GM12878 (cell line): ENCODE measurements at regions of chr1 and their contacts with region 1.

Region 1: GRCh38 chr1:162633081-162633762 is 958 bp downstream of the DDR2 start:
- DNase-seq: peak; percentile 64
- ATAC-seq: peak; percentile 82
- H3K4me3 ChIP-seq: peak overlapping the region; percentile 23; the same call in 1 of the 2 replicates
- H3K27ac ChIP-seq: peak overlapping the region; percentile 82
- H3K4me1 ChIP-seq: peaks cover 32% of the 10 kb centered on the region
- H3K27me3 ChIP-seq: no peaks in the 10 kb centered on the region
- CTCF ChIP-seq: no peak
- EP300 ChIP-seq: peak in 1 of 2 experiments; percentile 54; a peak in 1 of 4 replicates
- POLR2A ChIP-seq: no peak
- RAD21 ChIP-seq: no peak

Region 2: GRCh38 chr1:162430583-162430982 is 202.6 kb before region 1 on chr1:
- CTCF ChIA-PET with region 1: no interaction called
- POLR2A ChIA-PET with region 1: no interaction called
- RAD21 ChIA-PET with region 1: no interaction called
- SMC1A ChIA-PET with region 1: no interaction called
- in situ Hi-C with region 1: no loop called
- intact Hi-C with region 1: no loop called
- DNase-seq: no peak
- ATAC-seq: no peak
- H3K4me3 ChIP-seq: no peak overlapping the region
- H3K27ac ChIP-seq: no peak overlapping the region
- H3K4me1 ChIP-seq: no peaks in the 10 kb centered on the region
- H3K27me3 ChIP-seq: no peaks in the 10 kb centered on the region
- CTCF ChIP-seq: no peak
- EP300 ChIP-seq: no peak
- POLR2A ChIP-seq: no peak
- RAD21 ChIP-seq: no peak

Region 3: DNA sequence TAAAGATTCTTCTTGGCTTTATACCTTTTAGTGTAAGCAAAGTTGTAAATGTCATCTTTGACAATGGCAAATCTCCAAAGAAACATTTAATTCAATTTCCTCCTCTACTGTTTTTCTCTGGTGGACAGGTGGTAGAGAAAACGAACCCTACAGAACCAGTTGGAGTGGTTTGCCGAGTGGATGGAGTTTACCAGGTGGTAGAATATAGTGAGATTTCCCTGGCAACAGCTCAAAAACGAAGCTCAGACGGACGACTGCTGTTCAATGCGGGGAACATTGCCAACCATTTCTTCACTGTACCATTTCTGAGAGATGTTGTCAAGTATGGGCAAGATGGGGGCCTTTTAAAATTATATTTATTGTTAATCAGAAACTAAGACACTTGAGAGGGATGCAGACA is 45.9 kb before region 1 on chr1:
- CTCF ChIA-PET with region 1: no interaction called
- POLR2A ChIA-PET with region 1: no interaction called
- RAD21 ChIA-PET with region 1: no interaction called
- SMC1A ChIA-PET with region 1: no interaction called
- in situ Hi-C with region 1: no loop called
- intact Hi-C with region 1: no loop called
- DNase-seq: no peak
- ATAC-seq: no peak
- H3K4me3 ChIP-seq: no peak overlapping the region
- H3K27ac ChIP-seq: no peak overlapping the region
- H3K4me1 ChIP-seq: no peaks in the 10 kb centered on the region
- H3K27me3 ChIP-seq: no peaks in the 10 kb centered on the region
- CTCF ChIP-seq: no peak
- EP300 ChIP-seq: no peak
- POLR2A ChIP-seq: no peak
- RAD21 ChIP-seq: no peak

Region 4: GRCh38 chr1:162612606-162613400 is 20.4 kb before region 1 on chr1:
- CTCF ChIA-PET with region 1: interaction called, 79 read pairs
- POLR2A ChIA-PET with region 1: interaction called, 4 read pairs
- RAD21 ChIA-PET with region 1: interaction called, 27 read pairs
- SMC1A ChIA-PET with region 1: interaction called, 48 read pairs
- in situ Hi-C with region 1: no loop called
- intact Hi-C with region 1: no loop called
- DNase-seq: no peak
- ATAC-seq: no peak; the same call in 2 of the 3 replicates
- H3K4me3 ChIP-seq: no peak overlapping the region
- H3K27ac ChIP-seq: no peak overlapping the region
- H3K4me1 ChIP-seq: no peaks in the 10 kb centered on the region
- H3K27me3 ChIP-seq: no peaks in the 10 kb centered on the region
- CTCF ChIP-seq: no peak
- EP300 ChIP-seq: no peak
- POLR2A ChIP-seq: no peak
- RAD21 ChIP-seq: no peak

Region 5: GRCh38 chr1:162678439-162678838 is 45.2 kb after region 1 on chr1:
- CTCF ChIA-PET with region 1: interaction called, 5 read pairs
- POLR2A ChIA-PET with region 1: interaction called, 8 read pairs
- RAD21 ChIA-PET with region 1: interaction called, 27 read pairs
- SMC1A ChIA-PET with region 1: interaction called, 80 read pairs
- in situ Hi-C with region 1: no loop called
- intact Hi-C with region 1: no loop called
- DNase-seq: no peak
- ATAC-seq: no peak
- H3K4me3 ChIP-seq: no peak overlapping the region
- H3K27ac ChIP-seq: no peak overlapping the region
- H3K4me1 ChIP-seq: peaks cover 8% of the 10 kb centered on the region
- H3K27me3 ChIP-seq: no peaks in the 10 kb centered on the region
- CTCF ChIP-seq: no peak
- EP300 ChIP-seq: no peak
- POLR2A ChIP-seq: no peak
- RAD21 ChIP-seq: no peak

Region 6: GRCh38 chr1:162703708-162704107 is 70.5 kb after region 1 on chr1:
- CTCF ChIA-PET with region 1: interaction called, 4 read pairs
- POLR2A ChIA-PET with region 1: interaction called, 5 read pairs
- RAD21 ChIA-PET with region 1: interaction called, 39 read pairs
- SMC1A ChIA-PET with region 1: interaction called, 39 read pairs
- in situ Hi-C with region 1: no loop called
- intact Hi-C with region 1: no loop called
- DNase-seq: no peak
- ATAC-seq: no peak
- H3K4me3 ChIP-seq: no peak overlapping the region
- H3K27ac ChIP-seq: no peak overlapping the region
- H3K4me1 ChIP-seq: 0 out of 2 replicates have a peak, but pooled peaks cover 5% of the 10 kb centered on the region
- H3K27me3 ChIP-seq: no peaks in the 10 kb centered on the region
- CTCF ChIP-seq: no peak
- EP300 ChIP-seq: no peak
- POLR2A ChIP-seq: no peak
- RAD21 ChIP-seq: no peak

Region 7: DNA sequence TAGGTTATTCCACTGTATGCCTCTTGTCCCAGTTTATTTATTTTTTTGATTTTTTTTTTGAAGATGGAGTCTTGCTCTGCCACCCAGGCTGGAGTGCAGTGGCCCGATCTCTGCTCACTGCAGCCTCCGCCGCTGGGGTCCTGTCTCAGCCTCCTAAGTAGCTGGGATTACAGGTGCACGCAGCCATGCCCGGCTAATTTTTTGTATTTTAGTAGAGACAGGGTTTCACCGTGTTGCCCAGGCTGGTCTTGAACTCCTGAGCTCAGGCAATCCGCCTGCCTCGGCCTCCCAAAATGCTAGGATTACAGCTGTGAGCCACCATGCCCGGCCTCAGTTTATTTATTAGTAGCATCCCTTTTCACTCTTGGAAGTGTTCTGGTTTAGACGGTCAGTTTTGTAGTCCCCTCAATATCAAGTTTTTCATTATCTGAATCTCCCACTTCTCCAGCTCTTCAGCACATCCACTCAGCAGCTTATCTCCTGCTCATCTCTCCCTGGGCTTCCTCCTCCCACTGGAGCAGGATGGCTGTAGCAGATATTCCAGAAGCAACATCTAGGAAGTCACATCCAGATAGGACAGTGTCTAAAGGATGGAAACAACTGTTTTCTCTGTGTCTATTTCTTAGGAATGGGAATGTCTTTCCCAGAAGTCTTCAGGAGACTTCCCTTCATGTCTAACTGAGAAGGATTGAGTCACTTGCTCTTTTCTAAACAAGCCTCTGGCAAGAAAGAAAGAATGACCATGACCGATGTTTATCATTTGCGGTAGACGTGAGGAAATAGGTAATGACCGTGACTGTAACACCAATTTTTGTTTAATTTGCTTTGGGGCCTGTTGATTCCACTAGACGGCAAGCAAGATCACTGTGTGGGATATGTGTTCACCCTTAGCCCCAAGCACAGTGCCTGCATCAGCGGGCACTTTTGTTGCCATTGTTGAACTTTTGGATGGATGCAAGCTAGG is 213.3 kb after region 1 on chr1:
- CTCF ChIA-PET with region 1: no interaction called
- POLR2A ChIA-PET with region 1: no interaction called
- RAD21 ChIA-PET with region 1: no interaction called
- SMC1A ChIA-PET with region 1: no interaction called
- in situ Hi-C with region 1: no loop called
- intact Hi-C with region 1: no loop called
- DNase-seq: no peak
- ATAC-seq: no peak
- H3K4me3 ChIP-seq: no peak overlapping the region
- H3K27ac ChIP-seq: no peak overlapping the region
- H3K4me1 ChIP-seq: no peaks in the 10 kb centered on the region
- H3K27me3 ChIP-seq: no peaks in the 10 kb centered on the region; a peak in 1 of 4 replicates
- CTCF ChIP-seq: no peak
- EP300 ChIP-seq: no peak
- POLR2A ChIP-seq: no peak
- RAD21 ChIP-seq: no peak